GM23248 (cell line): ENCODE measurements at regions of chr5 and their contacts with region 1.

Region 1: DNA sequence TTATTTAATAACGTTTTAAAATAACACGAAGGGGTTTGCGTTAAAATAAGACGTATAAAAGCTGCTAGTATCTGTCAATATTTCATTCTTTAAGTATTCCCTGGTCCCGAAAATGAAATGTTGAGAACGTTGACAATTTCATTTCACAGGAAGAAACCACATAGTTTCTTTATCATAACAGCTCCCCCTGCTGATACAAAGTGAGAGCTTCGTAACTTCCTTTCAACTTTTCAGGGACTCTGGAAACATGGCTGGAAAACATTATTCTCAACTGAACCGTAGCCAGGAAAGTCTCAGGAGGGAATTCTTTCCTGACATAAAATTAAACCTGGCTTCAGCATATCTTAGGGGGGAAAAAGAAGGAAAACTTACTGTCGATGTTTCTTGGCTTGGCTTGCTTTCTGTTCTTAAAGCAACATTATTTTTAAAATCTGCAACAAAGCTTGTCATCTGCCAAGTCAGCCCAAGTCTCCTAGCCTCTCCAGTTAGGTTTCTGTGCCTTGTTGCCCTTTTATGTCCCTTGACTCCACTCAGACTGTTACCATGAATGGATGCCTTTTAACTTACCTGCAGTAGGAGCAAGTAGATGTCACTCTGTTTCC is 122.9 kb upstream of the DAB2 start:
- DNase-seq: peak; percentile 84
- H3K4me3 ChIP-seq: peak overlapping the region; percentile 60
- H3K27ac ChIP-seq: no peak overlapping the region; the same call in none of the 2 replicates
- H3K4me1 ChIP-seq: peaks cover 30% of the 10 kb centered on the region
- H3K27me3 ChIP-seq: no peaks in the 10 kb centered on the region

Region 2: GRCh38 chr5:39340506-39340905 is 207.1 kb before region 1 on chr5:
- in situ Hi-C with region 1: no loop called
- DNase-seq: peak; percentile 22
- H3K4me3 ChIP-seq: no peak overlapping the region
- H3K27ac ChIP-seq: no peak overlapping the region
- H3K4me1 ChIP-seq: peaks cover 6% of the 10 kb centered on the region; the same call in 1 of the 2 replicates
- H3K27me3 ChIP-seq: no peaks in the 10 kb centered on the region

Region 3: GRCh38 chr5:39411051-39411450 is 136.6 kb before region 1 on chr5:
- in situ Hi-C with region 1: loop called (anchors 10 kb)
- DNase-seq: peak; percentile 75
- H3K4me3 ChIP-seq: peak overlapping the region; percentile 33; the same call in 1 of the 2 replicates
- H3K27ac ChIP-seq: peak overlapping the region; percentile 64
- H3K4me1 ChIP-seq: peaks cover 92% of the 10 kb centered on the region
- H3K27me3 ChIP-seq: no peaks in the 10 kb centered on the region

Region 4: DNA sequence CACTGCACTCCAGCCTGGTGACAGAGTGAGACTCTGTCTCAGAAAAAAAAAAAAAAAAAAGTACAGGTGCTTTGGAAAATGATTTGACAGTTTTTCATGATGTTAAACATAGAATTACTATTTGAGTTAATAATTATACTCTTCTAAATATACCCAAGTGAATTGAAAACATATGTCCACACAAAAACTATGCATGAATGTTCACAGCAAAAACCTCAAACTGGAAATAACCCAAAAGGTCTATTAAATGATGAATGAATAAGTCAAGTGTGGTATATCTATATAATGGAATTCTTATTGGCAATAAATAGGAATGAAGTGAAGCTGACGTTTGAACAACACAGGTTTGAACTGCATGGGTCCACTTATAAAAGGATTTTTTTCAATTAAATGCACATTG is 84.3 kb after region 1 on chr5:
- in situ Hi-C with region 1: no loop called
- DNase-seq: peak; percentile 42
- H3K4me3 ChIP-seq: no peak overlapping the region
- H3K27ac ChIP-seq: no peak overlapping the region
- H3K4me1 ChIP-seq: no peaks in the 10 kb centered on the region
- H3K27me3 ChIP-seq: no peaks in the 10 kb centered on the region; the same call in 1 of the 2 replicates